ENCODE measurements at regions of chr4 and their contacts with region 1.

Region 1: GRCh38 chr4:101169044-101170014 is 178.0 kb downstream of the PPP3CA start:
- DNase-seq: peak; percentile 83
- ATAC-seq: peak; percentile 78
- H3K4me3 ChIP-seq: no peak overlapping the region
- H3K27ac ChIP-seq: no peak overlapping the region
- H3K4me1 ChIP-seq: peaks cover 29% of the 10 kb centered on the region
- H3K27me3 ChIP-seq: no peaks in the 10 kb centered on the region
- CTCF ChIP-seq: peak; percentile 79

Region 2: DNA sequence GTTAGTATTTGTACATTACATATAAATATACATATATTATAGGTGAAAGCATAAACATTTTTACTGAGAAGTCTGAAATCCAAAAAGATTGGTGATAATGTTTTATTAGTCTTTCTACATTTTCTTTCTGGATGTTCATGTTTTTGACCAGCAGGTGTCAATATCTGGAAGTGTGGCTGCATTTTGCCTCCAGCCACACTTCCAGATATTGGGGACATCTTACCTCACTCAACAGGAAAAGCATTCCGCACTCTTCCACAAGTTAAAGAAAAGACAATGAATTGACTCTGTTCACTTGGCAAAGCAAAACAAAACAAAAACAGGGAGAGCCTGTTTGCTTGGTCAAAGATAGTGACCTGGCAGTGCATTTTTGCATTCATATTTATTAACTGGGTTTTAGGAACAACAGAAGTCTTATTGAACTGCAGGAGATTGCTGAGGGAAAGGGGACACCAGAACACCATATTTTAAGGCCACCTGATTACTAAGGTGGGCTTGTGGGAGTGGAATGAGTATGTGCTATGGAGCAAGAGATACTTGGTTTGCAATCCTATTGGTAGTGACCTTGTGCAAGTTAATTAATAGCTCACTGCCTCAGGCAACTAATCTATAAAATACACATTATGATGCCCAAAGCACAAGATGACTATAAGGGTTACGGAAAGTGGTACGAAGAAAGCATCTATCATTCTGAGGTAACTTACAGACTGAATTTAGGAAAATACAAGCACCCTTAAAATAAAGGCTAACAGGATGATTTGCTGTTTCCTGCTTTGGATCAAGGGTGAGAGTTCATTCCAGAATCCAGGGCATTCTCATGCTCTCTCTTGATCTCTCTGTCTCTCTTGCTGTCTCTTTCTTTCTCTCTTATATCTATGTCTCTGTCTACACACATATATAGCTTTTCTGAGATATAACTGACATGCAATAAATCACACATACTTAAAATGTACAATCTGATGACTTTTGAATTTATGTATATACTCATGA is 261.6 kb before region 1 on chr4:
- CTCF ChIA-PET with region 1: no interaction called
- POLR2A ChIA-PET with region 1: no interaction called
- intact Hi-C with region 1: loop called (anchors 10 kb)
- DNase-seq: peak; percentile 50
- ATAC-seq: no peak; the same call in 1 of the 2 replicates
- H3K4me3 ChIP-seq: no peak overlapping the region
- H3K27ac ChIP-seq: no peak overlapping the region
- H3K4me1 ChIP-seq: peaks cover 5% of the 10 kb centered on the region; the same call in 1 of the 2 replicates
- H3K27me3 ChIP-seq: no peaks in the 10 kb centered on the region
- CTCF ChIP-seq: peak; percentile 59

Region 3: GRCh38 chr4:101191302-101192098 is 22.2 kb after region 1 on chr4:
- CTCF ChIA-PET with region 1: no interaction called
- POLR2A ChIA-PET with region 1: no interaction called
- intact Hi-C with region 1: no loop called
- DNase-seq: no peak
- ATAC-seq: no peak
- H3K4me3 ChIP-seq: no peak overlapping the region
- H3K27ac ChIP-seq: no peak overlapping the region
- H3K4me1 ChIP-seq: peaks cover 10% of the 10 kb centered on the region
- H3K27me3 ChIP-seq: no peaks in the 10 kb centered on the region
- CTCF ChIP-seq: no peak

Region 4: GRCh38 chr4:101730291-101731117 is 561.2 kb after region 1 on chr4:
- CTCF ChIA-PET with region 1: no interaction called
- POLR2A ChIA-PET with region 1: no interaction called
- intact Hi-C with region 1: loop called (anchors 5 kb)
- DNase-seq: peak; percentile 78
- ATAC-seq: peak; percentile 50
- H3K4me3 ChIP-seq: no peak overlapping the region
- H3K27ac ChIP-seq: no peak overlapping the region
- H3K4me1 ChIP-seq: no peaks in the 10 kb centered on the region
- H3K27me3 ChIP-seq: no peaks in the 10 kb centered on the region
- CTCF ChIP-seq: peak; percentile 81